Heart left ventricle (tissue), 16 donors: ENCODE measurements at regions of chr16 and their contacts with region 1.

Region 1: DNA sequence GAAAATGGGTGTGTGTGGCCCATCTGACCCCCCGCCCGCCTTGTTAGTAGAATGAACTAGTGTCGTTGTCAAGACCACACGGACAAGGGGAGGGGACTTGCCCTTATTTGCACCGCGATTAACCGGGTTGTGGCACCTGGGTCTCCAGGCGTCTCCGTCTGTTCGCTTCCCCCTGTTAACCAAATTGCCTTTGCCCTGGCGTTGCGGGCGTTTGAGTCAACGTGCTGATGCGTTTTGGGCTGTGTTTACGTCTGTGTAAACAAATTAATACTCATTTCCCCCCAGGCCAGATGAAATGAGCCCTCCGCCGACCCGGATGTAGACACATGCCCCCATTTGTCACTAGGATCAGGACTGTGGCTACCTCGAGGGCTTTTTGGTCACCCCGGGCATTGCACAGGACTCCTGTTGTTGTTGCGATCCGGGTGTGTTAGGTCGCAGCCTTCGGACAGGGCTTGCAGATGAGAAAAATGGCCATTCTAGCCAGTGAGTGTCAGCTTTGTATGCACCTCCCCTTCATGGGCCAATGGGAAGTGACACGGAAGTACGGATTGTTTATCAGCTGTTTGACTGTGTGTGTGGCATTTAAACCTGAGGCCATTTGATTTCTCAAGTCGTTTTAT is 906 bp downstream of the RBL2 start:
- DNase-seq: peak; percentile 66 to 78 (median 70)
- ATAC-seq: peak; percentile 91 to 96 (median 92)
- H3K4me3 ChIP-seq: peak overlapping the region; percentile 76 to 100 (median 94)
- H3K27ac ChIP-seq: peak overlapping the region; percentile 84 to 98 (median 95)
- H3K4me1 ChIP-seq: peaks cover 0 to 26% (median 14%) of the 10 kb centered on the region in 12 donors
- H3K27me3 ChIP-seq: no peaks in the 10 kb centered on the region
- CTCF ChIP-seq: no peak
- POLR2A ChIP-seq: peak in 1 of 2 donors; percentile 59

Region 2: DNA sequence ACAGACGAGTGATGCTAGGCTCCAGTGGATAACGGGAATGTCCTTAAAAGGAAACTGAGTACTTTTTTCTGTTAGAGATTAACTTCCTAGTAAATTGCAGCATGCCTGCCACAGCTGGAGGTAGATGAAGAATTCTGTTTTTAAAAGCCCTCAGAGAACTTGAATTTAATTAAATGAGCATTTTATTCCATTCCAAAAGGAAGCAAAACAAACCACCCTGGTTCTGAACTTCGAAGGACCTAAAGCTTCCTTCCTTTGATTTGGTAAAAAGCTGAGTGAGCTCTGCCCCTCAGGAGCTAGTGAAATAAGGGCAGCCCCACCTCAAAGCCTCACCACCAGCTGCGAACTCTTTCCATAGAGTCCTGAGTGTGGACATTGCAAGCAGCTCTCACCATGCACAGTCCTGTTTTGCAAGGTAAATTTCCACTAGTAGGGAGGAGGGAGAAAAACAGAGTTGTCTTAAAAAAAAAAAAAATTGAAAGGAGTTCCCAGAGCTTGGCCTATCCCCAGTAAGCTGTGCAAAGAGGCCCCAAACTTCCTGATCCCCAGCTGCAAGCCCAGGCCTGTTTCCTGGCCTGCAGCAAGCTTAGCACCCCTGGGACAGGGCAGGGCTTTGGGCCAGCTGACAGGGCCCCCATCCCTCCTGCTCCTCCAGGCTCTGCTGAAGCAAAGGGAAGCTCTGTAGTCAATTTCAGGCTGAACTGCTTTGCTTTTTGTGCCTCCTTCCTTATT is 393.7 kb before region 1 on chr16:
- intact Hi-C with region 1: loop called in 1 of 10 experiments (anchors 10 kb)
- DNase-seq: peak; percentile 84 to 90 (median 88)
- ATAC-seq: peak; percentile 78 to 93 (median 87)
- H3K4me3 ChIP-seq: peak overlapping the region in 8 of 12 donors; percentile 20 to 53 (median 40)
- H3K27ac ChIP-seq: peak overlapping the region; percentile 35 to 88 (median 80)
- H3K4me1 ChIP-seq: peaks cover 0 to 41% (median 21%) of the 10 kb centered on the region in 12 donors
- H3K27me3 ChIP-seq: peaks cover 0 to 9% (median 0%) of the 10 kb centered on the region in 9 donors
- CTCF ChIP-seq: no peak
- POLR2A ChIP-seq: no peak

Region 3: DNA sequence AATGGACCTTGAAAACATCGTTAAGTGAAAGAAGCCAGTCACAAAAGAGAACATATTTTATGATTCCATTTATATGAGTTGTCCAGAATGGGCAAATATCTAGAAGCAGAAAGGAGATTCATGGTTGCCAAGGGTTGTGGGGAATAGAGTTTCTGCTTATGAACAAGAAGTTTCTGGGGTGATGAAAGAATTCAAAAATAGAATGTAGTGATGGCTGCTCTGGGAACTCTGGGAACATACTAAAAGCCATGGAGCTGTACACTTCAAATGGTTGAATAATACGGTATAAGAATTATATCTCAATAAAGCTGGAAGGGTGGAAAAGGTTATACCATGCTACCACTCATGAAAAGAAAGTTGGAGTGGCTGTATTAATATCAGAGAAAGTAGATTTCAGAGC is 49.4 kb after region 1 on chr16:
- intact Hi-C with region 1: loop called in 1 of 10 experiments (anchors 1 kb)
- DNase-seq: no peak
- ATAC-seq: peak; percentile 27 to 47 (median 41)
- H3K4me3 ChIP-seq: no peak overlapping the region
- H3K27ac ChIP-seq: peak overlapping the region in 1 of 12 donors; percentile 39
- H3K4me1 ChIP-seq: peaks cover 0 to 8% (median 0%) of the 10 kb centered on the region in 12 donors
- H3K27me3 ChIP-seq: no peaks in the 10 kb centered on the region
- CTCF ChIP-seq: no peak
- POLR2A ChIP-seq: no peak

Region 4: GRCh38 chr16:53503270-53503923 is 68.2 kb after region 1 on chr16:
- intact Hi-C with region 1: loop called in 7 of 10 experiments (anchors 5 to 10 kb)
- DNase-seq: peak; percentile 100
- ATAC-seq: peak; percentile 91 to 96 (median 94)
- H3K4me3 ChIP-seq: peak overlapping the region; percentile 69 to 97 (median 94)
- H3K27ac ChIP-seq: peak overlapping the region; percentile 91 to 98 (median 96)
- H3K4me1 ChIP-seq: peaks cover 5 to 44% (median 32%) of the 10 kb centered on the region in 12 donors
- H3K27me3 ChIP-seq: no peaks in the 10 kb centered on the region
- CTCF ChIP-seq: no peak
- POLR2A ChIP-seq: peak; percentile 23 to 95

Region 5: DNA sequence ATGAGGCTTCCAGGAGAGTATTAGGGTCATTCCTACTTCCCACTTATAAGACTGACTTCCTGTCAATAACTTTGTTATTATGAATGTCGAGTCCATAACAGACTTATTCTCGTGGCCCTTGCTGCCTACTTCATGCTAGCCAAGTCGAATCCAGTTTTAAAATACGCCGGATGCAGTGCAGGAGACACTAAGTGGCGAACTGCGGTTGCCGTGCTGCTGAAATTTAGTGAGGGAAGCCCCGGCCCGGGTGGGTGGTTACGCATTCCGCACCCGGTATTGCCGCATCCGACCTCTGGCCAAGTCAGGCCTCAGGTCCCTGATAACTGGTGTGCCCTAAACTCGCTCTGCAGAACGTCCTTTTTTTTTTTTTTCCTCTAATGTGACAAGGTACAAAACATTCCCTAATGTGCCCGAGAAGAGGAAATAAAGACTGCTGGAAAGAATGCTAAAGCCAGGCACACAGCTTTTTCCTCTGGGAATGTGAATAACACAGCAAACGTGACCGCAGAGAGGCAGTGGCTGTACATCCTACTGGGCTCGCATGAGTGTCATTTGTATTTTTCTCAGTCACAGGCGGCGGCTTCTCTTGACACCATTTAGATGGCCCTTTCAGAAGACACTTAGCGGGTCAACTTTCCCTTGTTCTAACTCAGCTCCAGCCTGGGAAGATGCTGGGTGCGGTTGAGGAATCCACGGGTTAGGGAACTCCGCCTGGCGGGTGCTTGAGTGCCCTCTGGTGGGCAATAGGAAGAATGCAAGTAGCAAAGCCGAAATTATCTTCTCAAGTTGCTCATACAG is 74.9 kb after region 1 on chr16:
- intact Hi-C with region 1: loop called in 4 of 10 experiments (anchors 5 to 10 kb)
- DNase-seq: peak; percentile 70 to 83 (median 74)
- ATAC-seq: peak; percentile 70 to 79 (median 76)
- H3K4me3 ChIP-seq: peak overlapping the region in 6 of 12 donors; percentile 9 to 36 (median 26)
- H3K27ac ChIP-seq: peak overlapping the region; percentile 60 to 88 (median 83)
- H3K4me1 ChIP-seq: peaks cover 6 to 29% (median 16%) of the 10 kb centered on the region in 12 donors
- H3K27me3 ChIP-seq: no peaks in the 10 kb centered on the region
- CTCF ChIP-seq: peak; percentile 91 to 99 (median 96)
- POLR2A ChIP-seq: no peak

Region 6: GRCh38 chr16:53703590-53704444 is 268.6 kb after region 1 on chr16 and contains the starts of genes FTO and RPGRIP1L:
- intact Hi-C with region 1: loop called in 1 of 10 experiments (anchors 10 kb)
- DNase-seq: peak; percentile 98 to 99 (median 99)
- ATAC-seq: peak; percentile 99 to 100 (median 100)
- H3K4me3 ChIP-seq: peak within 1 kb of the TSS; percentile 65 to 93 (median 76)
- H3K27ac ChIP-seq: peak within 1 kb of the TSS in 11 of 12 donors; percentile 33 to 85 (median 69)
- H3K4me1 ChIP-seq: peaks cover 0 to 24% (median 19%) of the 10 kb centered on the region in 12 donors
- H3K27me3 ChIP-seq: no peaks in the 10 kb centered on the region
- CTCF ChIP-seq: peak in 5 of 12 donors; percentile 8 to 40 (median 17)
- POLR2A ChIP-seq: peak in 1 of 2 donors; percentile 41
- total RNA-seq, gene FTO: 77.2 to 105 (median 87.0) TPM
- total RNA-seq, gene RPGRIP1L: 1.4 to 4.6 (median 2.4) TPM